ENCODE measurements at regions of chr12 and their contacts with region 1.

Region 1: DNA sequence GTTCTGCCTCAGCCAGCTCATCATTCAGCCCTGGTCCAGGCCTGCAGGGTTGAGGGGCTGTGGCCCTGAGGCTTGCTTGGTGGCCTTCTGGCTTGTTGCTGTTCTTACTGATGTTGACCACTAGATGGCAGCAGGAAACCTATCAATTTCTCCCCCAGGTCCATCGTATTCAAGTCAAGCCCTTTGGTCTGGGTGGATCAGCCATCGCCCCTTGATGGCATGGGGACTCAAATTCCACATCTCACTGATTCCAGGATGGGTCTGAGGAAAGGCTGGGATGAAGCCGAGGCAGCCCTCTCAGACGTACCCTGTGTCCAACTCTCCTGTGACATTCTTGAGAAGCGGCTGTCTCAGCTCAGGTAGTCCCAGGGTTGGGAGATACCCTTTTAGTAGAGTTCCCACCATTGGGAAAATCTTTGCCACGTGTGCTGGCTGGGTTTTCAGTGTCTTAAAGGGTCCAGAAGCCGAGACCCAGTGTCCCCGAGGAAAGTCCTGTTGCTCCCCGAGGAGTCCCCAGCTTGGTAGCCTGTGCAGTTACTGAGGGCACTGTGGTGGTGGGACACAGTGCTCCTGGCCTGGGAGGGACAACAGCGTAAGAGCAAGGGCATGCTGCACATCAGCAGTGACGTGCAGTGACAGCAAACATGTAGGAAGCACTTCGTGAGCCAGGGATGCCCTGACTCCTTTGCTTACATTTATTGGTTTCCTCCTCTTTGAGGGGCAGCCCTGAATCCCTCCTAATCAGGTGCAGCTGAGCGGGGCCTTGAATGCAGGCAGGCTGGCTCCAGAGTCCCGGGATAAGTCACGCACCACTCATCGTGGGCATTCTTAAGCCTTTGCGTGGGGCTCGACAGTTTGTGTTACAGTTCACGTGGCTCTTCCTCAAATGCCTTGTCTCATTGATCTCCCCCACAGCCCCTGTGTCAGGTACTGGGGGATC is 58.6 kb downstream of the TSPAN9 start:
- DNase-seq: no peak
- H3K4me3 ChIP-seq: no peak overlapping the region
- H3K27ac ChIP-seq: no peak overlapping the region
- H3K4me1 ChIP-seq: peaks cover 41 to 69% (median 67%) of the 10 kb centered on the region in 4 donors
- H3K27me3 ChIP-seq: no peaks in the 10 kb centered on the region
- CTCF ChIP-seq: peak; percentile 74 to 83 (median 81)
- EP300 ChIP-seq: no peak
- POLR2A ChIP-seq: no peak

Region 2: GRCh38 chr12:3041558-3042164 is 94.1 kb before region 1 on chr12:
- intact Hi-C with region 1: no loop called
- DNase-seq: no peak
- H3K4me3 ChIP-seq: no peak overlapping the region
- H3K27ac ChIP-seq: no peak overlapping the region
- H3K4me1 ChIP-seq: peaks cover 0 to 6% (median 4%) of the 10 kb centered on the region in 4 donors
- H3K27me3 ChIP-seq: peaks cover 0 to 4% (median 0%) of the 10 kb centered on the region in 4 donors
- CTCF ChIP-seq: peak; percentile 51 to 67 (median 63)
- EP300 ChIP-seq: no peak
- POLR2A ChIP-seq: no peak

Region 3: DNA sequence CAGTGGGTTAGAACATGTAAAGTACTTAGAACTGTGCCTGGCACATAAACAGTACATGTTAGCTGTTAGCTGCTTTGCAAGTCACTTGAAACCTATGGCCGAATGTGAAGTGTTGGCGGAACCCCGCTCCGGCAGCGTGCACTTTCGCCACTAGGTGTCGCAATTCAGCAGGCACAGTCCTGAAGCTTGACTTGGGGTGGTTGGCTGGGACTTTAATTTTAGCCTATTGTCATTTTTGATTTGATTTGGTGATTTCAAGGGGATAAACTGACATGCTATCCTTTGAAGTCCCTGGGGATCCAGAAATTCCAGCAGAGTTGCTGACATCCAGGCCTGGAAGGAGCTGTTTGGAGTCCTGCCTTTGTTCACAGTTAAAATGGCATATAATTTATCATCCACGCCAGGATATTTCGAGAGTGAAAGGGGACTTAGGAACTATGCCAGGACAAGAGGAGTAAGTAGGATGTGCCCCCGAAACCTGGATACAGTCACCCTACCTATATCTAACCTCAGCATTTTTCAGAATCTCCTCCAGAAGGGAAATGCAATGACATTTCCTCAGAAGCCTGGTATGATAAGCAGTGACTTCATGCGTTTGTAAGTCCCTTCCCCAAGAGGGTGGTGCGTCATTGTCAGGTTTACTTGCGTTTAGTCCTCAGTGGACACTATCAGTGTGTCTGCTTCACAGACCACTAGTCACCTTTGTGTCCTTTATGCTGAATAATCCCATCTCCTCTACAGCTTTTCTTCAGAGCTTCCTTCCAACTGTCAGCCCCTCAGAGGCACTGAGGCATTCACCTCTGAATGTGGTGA is 62.1 kb before region 1 on chr12:
- intact Hi-C with region 1: loop called (anchors 2 kb)
- DNase-seq: peak; percentile 95
- H3K4me3 ChIP-seq: no peak overlapping the region
- H3K27ac ChIP-seq: peak overlapping the region in 1 of 4 donors; percentile 43
- H3K4me1 ChIP-seq: peaks cover 27 to 34% (median 31%) of the 10 kb centered on the region in 4 donors
- H3K27me3 ChIP-seq: no peaks in the 10 kb centered on the region
- CTCF ChIP-seq: peak; percentile 95 to 99 (median 96)
- EP300 ChIP-seq: no peak
- POLR2A ChIP-seq: no peak

Region 4: GRCh38 chr12:3192221-3192620 is 56.4 kb after region 1 on chr12:
- intact Hi-C with region 1: no loop called
- DNase-seq: no peak
- H3K4me3 ChIP-seq: no peak overlapping the region
- H3K27ac ChIP-seq: no peak overlapping the region
- H3K4me1 ChIP-seq: peaks cover 0 to 37% (median 4%) of the 10 kb centered on the region in 4 donors
- H3K27me3 ChIP-seq: no peaks in the 10 kb centered on the region
- CTCF ChIP-seq: no peak
- EP300 ChIP-seq: no peak
- POLR2A ChIP-seq: no peak

Region 5: GRCh38 chr12:3202734-3203446 is 67.1 kb after region 1 on chr12:
- intact Hi-C with region 1: loop called (anchors 2 kb)
- DNase-seq: no peak
- H3K4me3 ChIP-seq: no peak overlapping the region
- H3K27ac ChIP-seq: no peak overlapping the region
- H3K4me1 ChIP-seq: peaks cover 50 to 69% (median 62%) of the 10 kb centered on the region in 4 donors
- H3K27me3 ChIP-seq: peaks cover 0 to 19% (median 0%) of the 10 kb centered on the region in 4 donors
- CTCF ChIP-seq: peak; percentile 83 to 98 (median 84)
- EP300 ChIP-seq: no peak
- POLR2A ChIP-seq: no peak

Region 6: GRCh38 chr12:3275171-3276041 is 139.6 kb after region 1 on chr12:
- intact Hi-C with region 1: loop called (anchors 1 kb)
- DNase-seq: no peak
- H3K4me3 ChIP-seq: no peak overlapping the region
- H3K27ac ChIP-seq: no peak overlapping the region
- H3K4me1 ChIP-seq: peaks cover 17 to 40% (median 35%) of the 10 kb centered on the region in 4 donors
- H3K27me3 ChIP-seq: no peaks in the 10 kb centered on the region
- CTCF ChIP-seq: peak in 2 of 3 experiments; percentile 94 to 97
- EP300 ChIP-seq: no peak
- POLR2A ChIP-seq: no peak

Region 7: DNA sequence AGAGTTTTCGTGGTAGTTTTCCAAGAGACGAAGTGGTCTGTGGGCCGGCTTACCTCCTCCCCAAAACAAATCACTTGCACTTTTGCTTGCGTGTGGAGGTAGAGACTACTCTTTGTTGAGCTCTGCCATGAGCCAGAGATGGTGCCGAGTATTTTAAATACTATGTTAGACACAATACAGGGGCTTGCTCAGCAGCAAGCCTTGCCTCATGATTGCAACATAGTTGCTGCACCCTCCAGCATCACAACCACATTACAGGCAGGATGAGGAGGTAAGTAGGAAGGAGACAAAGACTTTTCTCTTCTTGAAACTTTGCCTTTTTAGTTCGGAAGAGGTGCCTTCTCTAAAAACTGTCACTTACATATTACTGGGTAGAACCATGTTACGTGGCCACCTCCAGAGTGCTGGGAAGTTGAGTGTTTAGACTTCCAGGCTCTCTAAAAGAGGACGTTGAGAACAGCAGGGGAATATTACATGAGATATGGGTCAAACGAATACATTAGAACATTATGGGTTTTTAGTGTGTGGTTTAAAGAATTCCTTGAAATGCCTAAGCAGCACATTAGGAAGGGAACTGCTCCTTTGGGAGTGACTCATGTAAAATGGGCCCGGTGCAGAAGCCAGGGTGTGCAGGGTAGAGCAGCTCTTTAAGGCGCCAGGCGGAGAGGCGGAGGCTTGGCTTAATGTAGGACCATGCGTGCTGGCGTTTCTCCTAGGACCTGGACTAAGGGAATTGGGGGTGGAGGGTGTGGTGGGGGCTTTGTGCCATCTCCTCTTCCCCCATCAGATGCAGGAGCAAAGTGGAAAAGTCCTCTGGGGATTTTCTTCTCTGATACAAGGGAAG is 244.6 kb after region 1 on chr12:
- intact Hi-C with region 1: no loop called
- DNase-seq: peak; percentile 75
- H3K4me3 ChIP-seq: no peak overlapping the region
- H3K27ac ChIP-seq: no peak overlapping the region
- H3K4me1 ChIP-seq: peaks cover 0 to 13% (median 11%) of the 10 kb centered on the region in 4 donors
- H3K27me3 ChIP-seq: peaks cover 0 to 8% (median 0%) of the 10 kb centered on the region in 4 donors
- CTCF ChIP-seq: no peak
- EP300 ChIP-seq: no peak
- POLR2A ChIP-seq: no peak